PC-3 (cell line): ENCODE measurements at regions of chr12 and their contacts with region 1.

Region 1: GRCh38 chr12:64243809-64244208 is 21.7 kb upstream of the KICS2 start:
- DNase-seq: no peak
- ATAC-seq: no peak
- H3K4me3 ChIP-seq: no peak overlapping the region
- H3K27ac ChIP-seq: no peak overlapping the region
- H3K4me1 ChIP-seq: no peaks in the 10 kb centered on the region
- H3K27me3 ChIP-seq: no peaks in the 10 kb centered on the region
- CTCF ChIP-seq: no peak

Region 2: DNA sequence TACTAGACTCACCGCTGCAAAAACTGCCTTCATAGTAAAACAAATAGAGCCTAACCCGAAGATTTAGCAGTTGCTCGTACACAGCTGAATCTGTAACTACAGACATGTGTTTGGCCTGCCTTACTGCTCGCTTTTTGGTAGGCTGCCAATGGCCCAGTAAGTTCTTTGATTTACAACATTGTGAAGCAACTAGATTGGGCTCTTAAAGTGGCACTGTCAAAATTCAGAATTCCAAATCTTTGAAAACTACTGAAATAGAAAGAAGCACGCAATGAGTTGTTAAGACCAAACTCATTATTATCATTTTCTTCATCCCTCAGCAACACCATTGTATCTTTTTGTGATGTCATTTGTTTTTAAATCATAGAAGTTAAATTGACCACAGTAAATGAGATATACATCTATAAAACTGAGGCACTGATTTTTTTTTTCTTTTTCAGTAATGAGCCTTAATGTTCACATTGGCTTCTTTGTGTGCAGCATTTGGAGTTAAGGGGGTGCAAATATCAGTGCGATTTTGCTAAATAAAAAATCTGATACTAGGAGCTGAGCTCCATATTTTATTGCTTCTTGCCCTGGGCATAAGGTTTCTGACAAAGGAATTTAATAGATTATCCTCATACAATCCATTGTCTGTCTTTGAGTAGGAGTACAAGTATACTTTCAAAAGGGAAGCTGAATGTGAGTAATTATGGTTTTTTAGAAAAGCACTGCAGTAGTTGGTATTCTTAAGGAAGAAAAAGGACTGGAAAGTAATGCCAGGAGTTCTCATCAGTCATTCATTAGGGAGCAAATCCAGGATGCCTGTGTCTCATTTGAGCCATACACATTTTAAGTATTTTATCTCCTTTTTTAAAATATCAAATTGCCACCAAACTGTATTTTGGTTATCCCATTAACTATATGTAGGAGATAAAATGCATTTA is 160.3 kb before region 1 on chr12:
- CTCF ChIA-PET with region 1: no interaction called
- POLR2A ChIA-PET with region 1: no interaction called
- intact Hi-C with region 1: no loop called
- DNase-seq: peak; percentile 58
- ATAC-seq: 0 out of 2 replicates have a peak, but pooled peaks have one; percentile 7
- H3K4me3 ChIP-seq: no peak overlapping the region
- H3K27ac ChIP-seq: peak overlapping the region; percentile 26
- H3K4me1 ChIP-seq: peaks cover 61% of the 10 kb centered on the region
- H3K27me3 ChIP-seq: no peaks in the 10 kb centered on the region
- CTCF ChIP-seq: no peak

Region 3: GRCh38 chr12:64362721-64363300 is 119.0 kb after region 1 on chr12:
- CTCF ChIA-PET with region 1: no interaction called
- POLR2A ChIA-PET with region 1: interaction called, 14 read pairs
- intact Hi-C with region 1: no loop called
- DNase-seq: no peak
- ATAC-seq: no peak
- H3K4me3 ChIP-seq: no peak overlapping the region
- H3K27ac ChIP-seq: no peak overlapping the region
- H3K4me1 ChIP-seq: no peaks in the 10 kb centered on the region
- H3K27me3 ChIP-seq: no peaks in the 10 kb centered on the region
- CTCF ChIP-seq: no peak